CD14-positive monocyte (primary cell): ENCODE measurements at regions of chr22 and their contacts with region 1.

Region 1: DNA sequence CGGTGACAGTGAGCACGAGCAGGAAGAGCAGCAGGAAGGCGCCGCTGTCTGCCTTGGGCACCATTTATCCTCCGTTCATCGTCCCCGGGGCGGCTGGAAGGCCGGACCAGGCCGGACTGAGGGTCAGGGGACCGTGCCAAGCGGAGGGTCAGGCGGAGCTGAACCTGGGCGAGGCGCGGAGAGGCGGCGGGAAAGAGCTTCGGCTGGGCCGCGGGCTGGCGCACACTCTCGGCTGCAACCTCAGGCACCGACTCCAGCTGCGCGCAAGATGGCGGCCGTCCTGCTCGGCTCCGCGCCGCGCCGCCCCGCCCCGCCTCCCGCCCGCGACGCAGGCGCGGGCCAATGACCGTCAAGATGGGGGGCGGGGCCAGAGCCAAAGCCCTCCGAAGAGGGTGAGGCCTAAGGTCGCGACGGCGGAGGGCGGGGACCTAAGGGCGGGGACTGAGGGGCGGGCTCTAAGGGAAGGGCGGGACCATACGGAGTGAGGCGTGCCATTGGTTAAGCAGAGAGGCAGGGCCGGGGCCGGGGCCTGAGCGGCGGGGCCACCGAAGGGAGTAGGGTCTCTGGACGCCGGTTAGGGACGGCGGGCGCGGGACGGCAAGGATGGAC is at the start of gene DGCR2:
- DNase-seq: peak; percentile 95 to 96 (median 96)
- H3K4me3 ChIP-seq: peak within 1 kb of the TSS; percentile 67 to 93 (median 91)
- H3K4me3 Mint-ChIP-seq: peak within 1 kb of the TSS; percentile 90 to 95
- H3K27ac ChIP-seq: peak within 1 kb of the TSS; percentile 61 to 88
- H3K27ac Mint-ChIP-seq: peak within 1 kb of the TSS; percentile 76 to 97 (median 92)
- H3K4me1 ChIP-seq: peaks cover 46 to 50% of the 10 kb centered on the region in 2 donors
- H3K4me1 Mint-ChIP-seq: peaks cover 50% of the 10 kb centered on the region
- H3K27me3 ChIP-seq: no peaks in the 10 kb centered on the region
- H3K27me3 Mint-ChIP-seq: peaks cover 1 to 7% (median 5%) of the 10 kb centered on the region in 3 donors
- CTCF ChIP-seq: no peak
- polyA plus RNA-seq, gene DGCR2: 28.9 to 37.0 (median 36.2) TPM

Region 2: DNA sequence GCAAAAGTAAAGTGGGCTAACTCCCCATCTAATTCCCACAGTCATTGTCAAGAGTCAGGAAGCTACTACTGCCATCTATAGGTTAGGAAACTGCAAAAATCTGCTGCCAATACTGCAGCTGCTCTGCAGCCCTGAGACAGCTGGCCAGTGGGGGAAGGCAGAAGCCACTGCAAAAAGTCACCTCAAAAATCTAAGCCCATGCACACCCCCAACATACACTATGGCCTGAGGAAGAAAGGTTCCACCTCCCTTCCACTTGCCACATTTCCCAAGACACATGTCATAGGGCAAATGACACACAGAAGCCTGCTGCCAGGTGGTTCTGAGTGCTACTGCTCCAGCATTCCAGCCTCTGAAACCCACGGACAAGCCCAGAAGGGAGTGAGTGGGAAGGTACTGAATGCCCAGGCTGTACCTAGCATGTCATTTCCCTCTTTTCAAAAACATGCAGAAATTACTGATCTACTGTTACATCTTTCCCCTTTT is 37.0 kb before region 1 on chr22:
- intact Hi-C with region 1: loop called (anchors 5 kb)
- DNase-seq: peak in 2 of 3 donors; percentile 37 to 55
- H3K4me3 ChIP-seq: peak overlapping the region in 2 of 3 experiments; percentile 12 to 70
- H3K4me3 Mint-ChIP-seq: peak overlapping the region; percentile 57 to 85
- H3K27ac ChIP-seq: peak overlapping the region; percentile 92 to 96
- H3K27ac Mint-ChIP-seq: peak overlapping the region; percentile 92 to 99 (median 96)
- H3K4me1 ChIP-seq: peaks cover 50 to 54% of the 10 kb centered on the region in 2 donors
- H3K4me1 Mint-ChIP-seq: peaks cover 60% of the 10 kb centered on the region
- H3K27me3 ChIP-seq: no peaks in the 10 kb centered on the region
- H3K27me3 Mint-ChIP-seq: no peaks in the 10 kb centered on the region
- CTCF ChIP-seq: peak; percentile 28

Region 3: DNA sequence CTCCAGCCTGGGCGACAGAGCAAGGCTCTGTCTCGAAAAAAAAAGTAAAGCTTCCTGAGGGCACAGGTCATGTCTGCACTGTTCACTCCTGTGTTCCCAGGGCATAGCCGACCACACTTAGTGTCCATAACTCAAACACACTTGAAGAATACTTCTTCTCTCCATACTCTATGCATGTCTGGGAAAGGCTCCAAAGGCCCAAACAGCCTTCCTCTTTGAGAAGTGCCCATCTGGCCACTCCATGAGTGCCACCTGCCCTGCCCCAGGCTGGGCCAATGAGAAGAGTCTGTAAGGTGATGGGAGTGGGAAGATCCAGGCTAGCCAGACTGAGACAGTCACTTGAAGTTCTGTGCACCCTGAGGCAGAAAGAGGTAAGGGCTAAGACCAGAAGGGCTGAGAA is 24.7 kb before region 1 on chr22:
- intact Hi-C with region 1: no loop called
- DNase-seq: no peak
- H3K4me3 ChIP-seq: no peak overlapping the region
- H3K4me3 Mint-ChIP-seq: peak overlapping the region in 1 of 2 donors; percentile 2
- H3K27ac ChIP-seq: peak overlapping the region; percentile 54 to 72
- H3K27ac Mint-ChIP-seq: peak overlapping the region; percentile 72 to 90 (median 75)
- H3K4me1 ChIP-seq: peaks cover 19 to 22% of the 10 kb centered on the region in 2 donors
- H3K4me1 Mint-ChIP-seq: peaks cover 41% of the 10 kb centered on the region
- H3K27me3 ChIP-seq: no peaks in the 10 kb centered on the region
- H3K27me3 Mint-ChIP-seq: peaks cover 0 to 2% (median 0%) of the 10 kb centered on the region in 3 donors
- CTCF ChIP-seq: no peak

Region 4: GRCh38 chr22:19109198-19110067 is 12.8 kb before region 1 on chr22:
- intact Hi-C with region 1: loop called in 1 of 2 experiments (anchors 1 kb)
- DNase-seq: peak; percentile 89 to 95 (median 93)
- H3K4me3 ChIP-seq: peak overlapping the region in 2 of 3 experiments; percentile 30 to 69
- H3K4me3 Mint-ChIP-seq: peak overlapping the region; percentile 10 to 86
- H3K27ac ChIP-seq: peak overlapping the region; percentile 90 to 92
- H3K27ac Mint-ChIP-seq: peak overlapping the region; percentile 94 to 100 (median 98)
- H3K4me1 ChIP-seq: peaks cover 62 to 70% of the 10 kb centered on the region in 2 donors
- H3K4me1 Mint-ChIP-seq: peaks cover 83% of the 10 kb centered on the region
- H3K27me3 ChIP-seq: no peaks in the 10 kb centered on the region
- H3K27me3 Mint-ChIP-seq: peaks cover 0 to 2% (median 2%) of the 10 kb centered on the region in 3 donors
- CTCF ChIP-seq: no peak

Region 5: DNA sequence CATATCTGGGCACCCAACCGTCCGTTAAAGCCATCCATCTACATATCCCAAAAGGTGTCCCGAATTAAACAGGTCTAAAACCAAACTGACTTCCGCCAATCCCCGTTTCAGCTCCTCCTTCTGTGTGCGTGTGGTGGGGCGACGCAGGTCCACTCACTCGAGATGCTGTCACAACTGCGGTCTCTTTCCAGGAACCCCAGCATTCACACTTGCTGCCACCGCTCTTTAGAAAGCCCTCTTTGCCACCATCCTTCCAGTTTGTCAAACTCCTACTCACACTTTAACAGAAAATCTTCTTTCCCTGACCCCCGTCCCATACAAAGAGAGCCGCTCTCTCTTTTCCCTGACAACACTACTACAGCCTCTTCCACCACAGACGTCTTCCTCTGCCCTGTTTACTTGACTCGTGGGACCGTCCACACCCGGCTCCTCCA is 21.7 kb after region 1 on chr22:
- intact Hi-C with region 1: loop called in 1 of 2 experiments (anchors 2 kb)
- DNase-seq: peak; percentile 16 to 53 (median 37)
- H3K4me3 ChIP-seq: peak overlapping the region; percentile 65 to 98 (median 96)
- H3K4me3 Mint-ChIP-seq: peak overlapping the region; percentile 98 to 99
- H3K27ac ChIP-seq: peak overlapping the region; percentile 63 to 93
- H3K27ac Mint-ChIP-seq: peak overlapping the region; percentile 93 to 98 (median 96)
- H3K4me1 ChIP-seq: peaks cover 12 to 13% of the 10 kb centered on the region in 2 donors
- H3K4me1 Mint-ChIP-seq: peaks cover 10% of the 10 kb centered on the region
- H3K27me3 ChIP-seq: peaks cover 15 to 22% of the 10 kb centered on the region in 2 donors
- H3K27me3 Mint-ChIP-seq: peaks cover 27 to 30% (median 28%) of the 10 kb centered on the region in 3 donors
- CTCF ChIP-seq: no peak

Region 6: DNA sequence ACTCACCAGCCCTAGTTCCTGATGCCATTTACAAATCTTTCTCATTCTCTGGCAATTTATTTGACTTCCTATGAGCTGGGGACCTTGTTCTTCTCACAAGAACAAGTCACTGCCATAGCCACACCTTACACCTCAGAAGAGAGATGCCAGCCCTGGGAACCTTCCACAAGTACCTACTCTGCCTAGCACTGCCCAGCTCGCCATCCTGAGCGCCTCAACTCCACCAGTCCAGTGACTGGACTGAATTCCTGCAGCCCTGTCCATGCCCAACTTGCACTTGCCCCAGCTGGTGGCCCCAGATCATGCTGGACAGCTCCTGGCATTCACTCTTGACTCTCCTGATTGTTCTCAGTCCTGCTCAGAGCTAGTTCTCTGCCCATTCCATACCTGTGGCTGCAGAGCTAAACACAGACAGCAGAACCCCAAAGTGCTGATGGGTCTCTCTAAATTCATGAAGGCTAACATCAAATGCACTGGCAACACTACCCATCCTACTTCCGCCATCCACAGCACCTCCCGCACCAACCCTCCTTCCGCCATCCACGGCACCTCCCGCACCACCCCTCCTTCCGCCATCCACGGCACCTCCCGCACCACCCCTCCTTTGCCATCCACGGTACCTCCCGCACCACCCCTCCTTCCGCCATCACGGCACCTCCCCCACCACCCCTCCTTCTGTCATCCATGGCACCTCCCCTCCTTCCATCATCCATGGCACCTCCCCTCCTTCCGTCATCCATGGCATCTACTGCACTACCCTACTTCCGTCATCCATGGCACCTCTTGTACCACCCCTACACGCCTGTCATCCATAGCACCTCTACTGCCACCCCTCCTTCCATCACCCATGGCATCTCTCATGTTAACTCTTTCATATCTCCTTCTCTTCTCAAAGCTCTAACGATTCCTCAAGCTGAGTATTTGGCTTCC is 79.9 kb after region 1 on chr22:
- intact Hi-C with region 1: no loop called
- DNase-seq: peak in 1 of 3 donors; percentile 13
- H3K4me3 ChIP-seq: no peak overlapping the region
- H3K4me3 Mint-ChIP-seq: no peak overlapping the region
- H3K27ac ChIP-seq: no peak overlapping the region
- H3K27ac Mint-ChIP-seq: peak overlapping the region in 5 of 7 donors; percentile 3 to 69 (median 45)
- H3K4me1 ChIP-seq: no peaks in the 10 kb centered on the region
- H3K4me1 Mint-ChIP-seq: no peaks in the 10 kb centered on the region
- H3K27me3 ChIP-seq: no peaks in the 10 kb centered on the region
- H3K27me3 Mint-ChIP-seq: peaks cover 0 to 1% (median 0%) of the 10 kb centered on the region in 3 donors
- CTCF ChIP-seq: no peak

Region 7: DNA sequence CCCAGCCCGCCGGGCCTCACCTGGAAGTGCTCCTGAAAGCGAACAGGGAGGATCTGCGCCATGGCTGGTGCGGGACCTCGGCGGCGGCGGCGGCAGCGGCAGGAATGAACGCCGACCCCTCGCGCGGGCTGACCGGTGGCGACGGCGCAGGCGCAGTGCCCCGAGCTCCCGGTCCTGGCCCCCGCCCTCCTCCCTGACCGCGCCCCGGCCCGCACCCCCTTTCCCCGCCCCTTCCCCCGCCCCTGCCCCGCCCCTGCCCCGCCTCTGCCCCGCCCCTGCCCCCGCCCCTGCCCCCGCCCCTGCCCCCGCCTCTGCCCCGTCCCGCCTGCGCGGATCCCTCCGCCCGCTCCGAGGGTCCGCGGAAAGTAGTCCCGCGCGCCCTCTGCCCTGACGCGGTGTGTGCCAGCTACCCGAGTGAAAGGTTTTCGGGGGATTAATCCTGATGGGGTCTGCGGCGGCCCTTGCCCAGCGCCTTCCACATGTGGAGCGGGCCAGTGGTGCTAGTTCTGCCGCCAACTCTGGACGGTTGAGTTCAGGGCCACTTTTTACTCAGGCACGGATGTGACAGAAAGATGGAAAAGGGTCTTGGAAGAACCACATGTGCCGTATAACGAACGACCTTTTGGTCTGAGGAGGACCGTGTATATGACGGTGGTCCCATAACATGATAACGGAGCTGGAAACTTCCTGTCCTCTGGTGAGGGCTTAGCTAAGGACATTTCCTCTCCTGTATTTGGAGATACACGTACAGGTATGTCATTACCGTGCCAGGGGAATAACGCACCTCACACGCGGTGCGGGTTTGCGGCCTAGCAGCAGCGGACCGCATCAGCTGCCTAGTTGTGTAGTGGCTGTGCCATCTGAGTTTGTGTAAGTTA is 169.6 kb after region 1 on chr22 and contains the start of gene CLTCL1:
- intact Hi-C with region 1: loop called (anchors 2 to 5 kb)
- DNase-seq: peak; percentile 49 to 71 (median 71)
- H3K4me3 ChIP-seq: peak within 1 kb of the TSS; percentile 82 to 96 (median 96)
- H3K4me3 Mint-ChIP-seq: peak within 1 kb of the TSS; percentile 86 to 96
- H3K27ac ChIP-seq: peak within 1 kb of the TSS in 1 of 2 donors; percentile 64
- H3K27ac Mint-ChIP-seq: peak within 1 kb of the TSS in 6 of 7 donors; percentile 7 to 86 (median 74)
- H3K4me1 ChIP-seq: peaks cover 18 to 22% of the 10 kb centered on the region in 2 donors
- H3K4me1 Mint-ChIP-seq: peaks cover 28% of the 10 kb centered on the region
- H3K27me3 ChIP-seq: peaks cover 18 to 22% of the 10 kb centered on the region in 2 donors
- H3K27me3 Mint-ChIP-seq: peaks cover 19 to 36% (median 21%) of the 10 kb centered on the region in 3 donors
- CTCF ChIP-seq: no peak
- polyA plus RNA-seq, gene CLTCL1: 5.1 to 17.0 (median 6.1) TPM